Naive thymus-derived CD4-positive, alpha-beta T cell (primary cell): ENCODE measurements at regions of chr16 and their contacts with region 1.

Region 1: GRCh38 chr16:2513405-2514322 is at the start of gene ATP6V0C:
- DNase-seq: peak; percentile 89 to 98 (median 94)
- ATAC-seq: peak; percentile 87
- H3K4me3 ChIP-seq: peak within 1 kb of the TSS; percentile 71
- H3K4me3 Mint-ChIP-seq: peak within 1 kb of the TSS; percentile 85 to 94 (median 91)
- H3K27ac ChIP-seq: peak within 1 kb of the TSS; percentile 100
- H3K27ac Mint-ChIP-seq: peak within 1 kb of the TSS; percentile 90 to 98 (median 96)
- H3K4me1 ChIP-seq: peaks cover 31 to 44% of the 10 kb centered on the region in 2 donors
- H3K4me1 Mint-ChIP-seq: peaks cover 36 to 60% (median 48%) of the 10 kb centered on the region in 7 donors
- H3K27me3 ChIP-seq: no peaks in the 10 kb centered on the region
- H3K27me3 Mint-ChIP-seq: peaks cover 0 to 3% (median 0%) of the 10 kb centered on the region in 5 donors
- total RNA-seq, gene ATP6V0C: 98.2 to 303 (median 113) TPM

Region 2: GRCh38 chr16:1492923-1493745 is 1020.5 kb before region 1 on chr16 and contains the start of gene TELO2:
- CTCF ChIA-PET with region 1: interaction called, 6 read pairs
- POLR2A ChIA-PET with region 1: no interaction called
- intact Hi-C with region 1: loop called in 1 of 2 experiments (anchors 5 kb)
- DNase-seq: peak; percentile 82 to 96 (median 90)
- ATAC-seq: peak; percentile 96
- H3K4me3 ChIP-seq: peak within 1 kb of the TSS; percentile 59
- H3K4me3 Mint-ChIP-seq: peak within 1 kb of the TSS; percentile 83 to 99 (median 94)
- H3K27ac ChIP-seq: peak within 1 kb of the TSS; percentile 88
- H3K27ac Mint-ChIP-seq: peak within 1 kb of the TSS; percentile 97 to 100 (median 99)
- H3K4me1 ChIP-seq: peaks cover 12 to 17% of the 10 kb centered on the region in 2 donors
- H3K4me1 Mint-ChIP-seq: peaks cover 9 to 20% (median 12%) of the 10 kb centered on the region in 7 donors
- H3K27me3 ChIP-seq: no peaks in the 10 kb centered on the region
- H3K27me3 Mint-ChIP-seq: no peaks in the 10 kb centered on the region
- total RNA-seq, gene TELO2: 46.9 to 58.9 (median 50.3) TPM

Region 3: DNA sequence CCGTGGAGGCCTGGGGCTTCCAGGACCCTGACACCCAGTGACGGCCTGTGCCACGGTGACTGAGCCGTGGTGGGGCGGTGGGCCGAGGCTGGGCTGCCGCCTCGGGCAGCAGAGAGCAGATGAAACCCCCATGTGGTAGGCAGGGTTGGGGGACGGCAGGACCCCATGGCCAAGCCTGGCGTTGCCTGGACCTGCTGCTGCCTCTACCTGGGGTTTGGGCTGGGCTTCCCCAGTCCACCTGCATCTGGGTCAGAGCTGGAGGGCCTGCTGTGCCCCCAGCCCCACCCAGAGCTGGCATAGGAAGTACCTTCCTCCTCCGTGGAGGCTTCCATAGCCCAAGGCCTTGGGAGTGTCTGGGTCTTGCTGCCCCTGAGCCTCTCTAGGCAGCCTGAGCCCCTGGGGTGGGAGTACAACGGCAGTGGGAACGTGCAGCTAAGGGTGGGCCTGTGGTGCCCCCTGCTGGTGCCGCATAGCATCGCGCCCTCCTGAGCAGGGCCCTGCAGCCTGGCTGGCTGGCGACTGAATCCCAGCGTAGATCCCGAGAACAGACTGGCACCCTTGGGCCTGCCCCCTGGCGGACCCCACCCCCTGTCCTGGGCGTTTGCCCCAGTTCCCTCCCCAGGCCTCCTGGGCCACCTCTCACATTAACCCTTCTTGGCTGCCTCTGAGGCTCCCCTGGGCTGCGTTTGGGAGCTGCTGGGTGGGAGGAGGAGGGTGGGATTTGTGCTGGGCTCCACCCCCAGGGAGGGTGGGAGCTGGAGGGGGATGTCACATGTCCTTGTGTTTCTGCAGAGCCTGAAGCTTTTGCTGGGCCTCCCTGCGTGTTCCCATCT is 12.5 kb before region 1 on chr16:
- CTCF ChIA-PET with region 1: no interaction called
- POLR2A ChIA-PET with region 1: interaction called, 14 read pairs
- intact Hi-C with region 1: no loop called
- DNase-seq: peak; percentile 64 to 85 (median 74)
- ATAC-seq: peak; percentile 97
- H3K4me3 ChIP-seq: no peak overlapping the region
- H3K4me3 Mint-ChIP-seq: no peak overlapping the region
- H3K27ac ChIP-seq: no peak overlapping the region
- H3K27ac Mint-ChIP-seq: no peak overlapping the region
- H3K4me1 ChIP-seq: no peaks in the 10 kb centered on the region
- H3K4me1 Mint-ChIP-seq: peaks cover 0 to 3% (median 0%) of the 10 kb centered on the region in 7 donors
- H3K27me3 ChIP-seq: no peaks in the 10 kb centered on the region
- H3K27me3 Mint-ChIP-seq: no peaks in the 10 kb centered on the region

Region 4: DNA sequence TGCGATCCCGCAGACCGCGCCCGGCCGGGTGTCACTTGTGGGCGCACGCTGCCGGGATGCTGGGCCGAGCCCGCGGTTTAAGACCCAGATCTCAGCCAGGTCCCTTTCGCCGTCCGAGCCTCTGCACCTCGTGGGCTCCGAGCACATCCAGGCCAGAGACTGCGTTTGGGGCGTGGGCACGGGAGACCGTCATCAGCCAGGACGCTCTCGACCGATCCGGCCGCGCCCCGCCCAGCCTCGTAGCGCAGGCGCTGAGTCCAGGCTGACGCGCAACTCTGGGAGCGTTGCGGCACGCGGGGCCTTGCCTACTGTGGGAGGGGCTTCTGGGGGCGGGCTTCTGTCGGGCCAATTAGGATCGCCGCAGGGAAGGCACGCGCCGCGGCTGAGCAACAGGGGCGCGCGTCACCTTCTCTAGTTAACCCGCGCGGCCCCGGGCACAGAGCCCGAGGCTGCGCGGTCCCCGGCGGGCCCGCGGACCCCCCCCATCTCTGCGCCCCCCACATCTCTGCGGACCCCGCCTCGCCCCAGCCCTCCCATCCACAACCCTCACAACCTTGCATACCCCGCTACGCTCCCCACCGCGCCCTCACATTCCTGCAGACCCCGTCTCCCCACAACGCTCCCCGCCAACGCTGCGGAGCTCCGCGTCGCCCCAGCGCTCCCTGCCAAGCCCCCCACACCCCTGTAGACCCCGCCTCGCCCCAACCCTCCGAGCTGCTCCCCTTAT is 18.3 kb after region 1 on chr16:
- CTCF ChIA-PET with region 1: interaction called, 4 read pairs
- POLR2A ChIA-PET with region 1: interaction called, 83 read pairs
- intact Hi-C with region 1: loop called (anchors 1 kb)
- DNase-seq: peak; percentile 94 to 97 (median 96)
- ATAC-seq: peak; percentile 93
- H3K4me3 ChIP-seq: peak overlapping the region; percentile 71
- H3K4me3 Mint-ChIP-seq: peak overlapping the region; percentile 84 to 100 (median 96)
- H3K27ac ChIP-seq: peak overlapping the region; percentile 93
- H3K27ac Mint-ChIP-seq: peak overlapping the region; percentile 96 to 100 (median 98)
- H3K4me1 ChIP-seq: peaks cover 5 to 7% of the 10 kb centered on the region in 2 donors
- H3K4me1 Mint-ChIP-seq: peaks cover 0 to 31% (median 20%) of the 10 kb centered on the region in 7 donors
- H3K27me3 ChIP-seq: no peaks in the 10 kb centered on the region
- H3K27me3 Mint-ChIP-seq: no peaks in the 10 kb centered on the region

Region 5: GRCh38 chr16:2537453-2538379 is 24.1 kb after region 1 on chr16 and contains the start of gene PDPK1:
- CTCF ChIA-PET with region 1: interaction called, 4 read pairs
- POLR2A ChIA-PET with region 1: interaction called, 83 read pairs
- intact Hi-C with region 1: loop called (anchors 1 kb)
- DNase-seq: peak; percentile 87 to 97 (median 94)
- ATAC-seq: peak; percentile 92
- H3K4me3 ChIP-seq: peak within 1 kb of the TSS; percentile 57
- H3K4me3 Mint-ChIP-seq: peak within 1 kb of the TSS; percentile 84 to 94 (median 88)
- H3K27ac ChIP-seq: peak within 1 kb of the TSS; percentile 65
- H3K27ac Mint-ChIP-seq: peak within 1 kb of the TSS; percentile 62 to 95 (median 89)
- H3K4me1 ChIP-seq: peaks cover 0 to 14% of the 10 kb centered on the region in 2 donors
- H3K4me1 Mint-ChIP-seq: peaks cover 26 to 53% (median 43%) of the 10 kb centered on the region in 7 donors
- H3K27me3 ChIP-seq: no peaks in the 10 kb centered on the region
- H3K27me3 Mint-ChIP-seq: no peaks in the 10 kb centered on the region
- total RNA-seq, gene PDPK1: 52.2 to 71.5 (median 58.3) TPM